ENCODE measurements at regions of chr4 and their contacts with region 1.

Region 1: GRCh38 chr4:5050520-5051277 is 581 bp upstream of the STK32B start:
- DNase-seq: no peak
- ATAC-seq: peak; percentile 82
- H3K4me3 ChIP-seq: peak overlapping the region; percentile 51 to 84
- H3K27ac ChIP-seq: peak overlapping the region; percentile 51
- H3K4me1 ChIP-seq: peaks cover 4% of the 10 kb centered on the region
- H3K27me3 ChIP-seq: no peaks in the 10 kb centered on the region
- CTCF ChIP-seq: peak; percentile 80

Region 2: DNA sequence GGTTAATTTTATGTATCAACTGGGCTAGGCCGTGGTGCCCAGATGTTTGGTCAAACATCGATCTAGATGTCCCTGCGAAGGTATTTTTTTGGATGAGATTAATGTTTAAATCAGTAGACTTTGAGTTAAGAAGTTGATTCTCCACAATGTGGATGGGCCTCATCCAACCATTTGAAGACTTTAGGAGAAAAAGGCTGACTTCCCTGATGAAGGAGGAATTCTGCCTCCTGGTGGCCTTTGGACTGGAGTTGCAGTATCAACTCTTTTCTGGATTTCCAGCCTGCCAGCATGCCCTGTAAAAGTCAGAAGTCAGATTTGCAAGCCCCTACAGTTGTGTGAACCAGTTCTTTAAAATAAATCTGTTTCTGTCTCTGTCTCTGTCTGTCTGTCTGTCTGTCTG is 92.0 kb after region 1 on chr4:
- CTCF ChIA-PET with region 1: no interaction called
- POLR2A ChIA-PET with region 1: no interaction called
- in situ Hi-C with region 1: no loop called
- intact Hi-C with region 1: loop called (anchors 1 kb)
- DNase-seq: no peak
- ATAC-seq: no peak
- H3K4me3 ChIP-seq: no peak overlapping the region
- H3K27ac ChIP-seq: no peak overlapping the region
- H3K4me1 ChIP-seq: no peaks in the 10 kb centered on the region
- H3K27me3 ChIP-seq: no peaks in the 10 kb centered on the region
- CTCF ChIP-seq: peak; percentile 68

Region 3: DNA sequence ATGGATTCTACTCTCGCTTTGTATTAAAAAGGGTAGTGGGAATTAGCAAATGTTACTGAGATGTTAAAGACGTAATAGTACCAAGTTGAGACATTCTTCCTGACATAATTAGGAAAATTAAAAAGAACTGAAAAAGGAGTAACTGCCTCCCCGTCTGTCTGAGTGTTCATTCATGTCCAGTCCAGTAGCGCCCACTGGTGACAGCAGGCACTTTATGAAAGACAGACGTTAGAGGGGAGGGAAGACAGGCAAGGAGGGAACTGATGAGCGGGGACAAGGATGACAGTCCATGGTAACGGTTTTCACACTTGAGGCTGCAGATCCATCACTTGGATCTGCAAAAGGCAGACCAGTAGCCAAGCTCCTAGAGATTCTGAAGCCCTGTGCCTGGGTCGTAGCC is 327.3 kb after region 1 on chr4:
- CTCF ChIA-PET with region 1: no interaction called
- POLR2A ChIA-PET with region 1: no interaction called
- in situ Hi-C with region 1: no loop called
- intact Hi-C with region 1: loop called (anchors 10 kb)
- DNase-seq: no peak
- ATAC-seq: no peak
- H3K4me3 ChIP-seq: no peak overlapping the region
- H3K27ac ChIP-seq: no peak overlapping the region
- H3K4me1 ChIP-seq: no peaks in the 10 kb centered on the region
- H3K27me3 ChIP-seq: no peaks in the 10 kb centered on the region
- CTCF ChIP-seq: peak; percentile 35

Region 4: DNA sequence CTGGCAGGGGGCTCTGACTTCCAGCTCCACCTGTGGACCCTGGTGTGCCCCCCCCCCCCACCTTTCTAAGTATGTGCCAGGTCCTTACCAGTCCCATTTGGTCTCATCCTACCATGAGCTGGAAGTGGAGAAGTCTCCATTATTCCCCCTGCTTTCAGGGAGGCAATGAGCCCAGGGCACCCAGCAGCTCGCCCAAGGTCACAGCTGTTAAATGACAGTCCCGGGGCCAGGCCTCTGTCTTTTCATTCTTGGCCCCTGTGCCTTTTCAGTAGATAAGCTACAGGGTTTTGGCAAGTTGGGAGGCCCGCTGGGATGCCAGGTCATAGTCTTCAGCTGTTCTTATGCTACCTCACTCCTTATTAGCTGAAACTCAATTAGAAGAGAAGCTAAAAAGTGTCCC is 408.5 kb after region 1 on chr4:
- CTCF ChIA-PET with region 1: no interaction called
- POLR2A ChIA-PET with region 1: no interaction called
- in situ Hi-C with region 1: no loop called
- intact Hi-C with region 1: loop called (anchors 2 kb)
- DNase-seq: no peak
- ATAC-seq: no peak
- H3K4me3 ChIP-seq: no peak overlapping the region
- H3K27ac ChIP-seq: no peak overlapping the region
- H3K4me1 ChIP-seq: no peaks in the 10 kb centered on the region
- H3K27me3 ChIP-seq: no peaks in the 10 kb centered on the region
- CTCF ChIP-seq: no peak

Region 5: DNA sequence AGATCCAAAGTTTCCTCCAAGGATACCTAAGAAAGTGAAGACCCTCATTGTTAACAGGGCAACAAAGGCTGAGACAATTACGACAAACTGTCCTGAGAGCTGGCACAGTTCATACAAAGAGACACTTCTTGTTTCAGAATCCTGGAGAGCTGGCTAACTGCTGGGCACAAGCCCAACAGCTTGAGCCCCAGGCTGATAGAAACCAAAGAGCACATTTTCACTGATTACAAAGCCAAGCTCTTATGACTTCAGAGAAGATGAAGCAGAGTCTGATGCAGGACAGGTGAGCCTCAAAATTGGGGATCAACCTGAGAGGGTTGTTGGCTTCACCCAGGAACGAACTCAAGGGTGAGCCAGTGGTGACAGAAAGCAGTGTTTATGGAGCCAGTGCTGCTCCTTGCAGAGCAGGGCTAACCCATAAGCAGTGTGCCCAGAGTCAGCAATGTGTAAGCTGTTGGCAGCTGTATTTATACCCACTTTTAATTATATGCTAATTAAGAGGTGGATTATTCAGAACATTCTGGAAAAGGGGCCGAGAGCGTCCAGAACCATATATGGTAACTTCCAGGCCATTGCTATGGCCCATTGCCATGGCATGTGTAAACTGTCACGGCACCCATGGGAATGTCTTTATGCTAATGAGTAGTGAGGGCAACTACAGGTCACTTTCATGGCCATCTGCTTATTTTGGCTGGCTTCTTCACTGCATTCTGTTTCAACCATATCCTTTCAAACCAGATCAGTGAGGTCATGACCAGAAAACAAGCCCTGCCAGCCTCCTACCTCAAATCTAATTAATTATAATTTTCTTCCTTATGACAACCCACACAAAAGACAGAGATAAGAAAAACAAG is 474.0 kb after region 1 on chr4:
- CTCF ChIA-PET with region 1: no interaction called
- POLR2A ChIA-PET with region 1: no interaction called
- in situ Hi-C with region 1: no loop called
- intact Hi-C with region 1: no loop called
- DNase-seq: no peak
- ATAC-seq: no peak
- H3K4me3 ChIP-seq: no peak overlapping the region
- H3K27ac ChIP-seq: no peak overlapping the region
- H3K4me1 ChIP-seq: no peaks in the 10 kb centered on the region
- H3K27me3 ChIP-seq: no peaks in the 10 kb centered on the region
- CTCF ChIP-seq: no peak

Region 6: GRCh38 chr4:5791654-5792053 is 741.0 kb after region 1 on chr4:
- CTCF ChIA-PET with region 1: no interaction called
- POLR2A ChIA-PET with region 1: no interaction called
- in situ Hi-C with region 1: no loop called
- intact Hi-C with region 1: loop called (anchors 5 kb)
- DNase-seq: no peak
- ATAC-seq: no peak
- H3K4me3 ChIP-seq: no peak overlapping the region
- H3K27ac ChIP-seq: no peak overlapping the region
- H3K4me1 ChIP-seq: no peaks in the 10 kb centered on the region
- H3K27me3 ChIP-seq: no peaks in the 10 kb centered on the region
- CTCF ChIP-seq: no peak